PC-3 (cell line): ENCODE measurements at regions of chr9 and their contacts with region 1.

Region 1: GRCh38 chr9:13939134-13939533 is 374.8 kb downstream of the NFIB start:
- DNase-seq: peak; percentile 73
- ATAC-seq: no peak
- H3K4me3 ChIP-seq: no peak overlapping the region
- H3K27ac ChIP-seq: peak overlapping the region; percentile 72
- H3K4me1 ChIP-seq: peaks cover 52% of the 10 kb centered on the region
- H3K27me3 ChIP-seq: no peaks in the 10 kb centered on the region
- CTCF ChIP-seq: no peak

Region 2: DNA sequence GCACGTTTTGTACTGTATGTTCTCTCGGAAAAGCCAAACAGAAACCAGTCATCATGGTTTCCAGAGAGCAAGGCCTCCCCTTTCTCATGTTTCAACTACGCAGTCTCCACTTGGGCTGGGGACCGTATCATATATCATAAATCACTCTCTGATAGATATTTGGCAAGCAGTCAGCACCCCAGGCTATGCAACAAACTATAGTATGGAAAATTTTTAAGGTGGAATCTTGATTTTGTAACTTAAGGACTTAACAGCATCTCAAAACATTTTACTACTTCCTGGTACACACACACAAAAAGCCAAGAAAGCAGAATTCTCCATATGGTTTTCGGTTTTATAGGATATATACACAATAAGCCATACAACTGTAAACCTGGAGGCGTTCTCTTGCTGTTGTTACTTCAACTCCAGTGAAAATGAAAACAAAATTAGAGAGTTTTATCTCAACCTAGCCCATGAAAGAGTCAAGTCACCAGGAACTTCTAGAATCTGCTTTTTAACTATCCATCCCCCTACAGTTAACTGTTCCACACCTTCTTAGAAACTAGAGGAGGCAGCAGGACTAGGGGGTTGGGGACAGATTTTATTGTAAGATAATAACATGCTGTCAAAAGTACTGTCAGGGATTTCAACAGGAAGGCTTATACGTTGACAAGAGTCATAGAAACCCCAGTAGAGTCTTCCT is 91.4 kb after region 1 on chr9:
- CTCF ChIA-PET with region 1: no interaction called
- POLR2A ChIA-PET with region 1: interaction called, 25 read pairs
- intact Hi-C with region 1: no loop called
- DNase-seq: peak; percentile 83
- ATAC-seq: peak; percentile 85
- H3K4me3 ChIP-seq: peak overlapping the region; percentile 46; the same call in 1 of the 2 replicates
- H3K27ac ChIP-seq: peak overlapping the region; percentile 47
- H3K4me1 ChIP-seq: peaks cover 27% of the 10 kb centered on the region
- H3K27me3 ChIP-seq: no peaks in the 10 kb centered on the region
- CTCF ChIP-seq: no peak